Lower leg skin (tissue), 4 donors: ENCODE measurements at regions of chr20 and their contacts with region 1.

Region 1: DNA sequence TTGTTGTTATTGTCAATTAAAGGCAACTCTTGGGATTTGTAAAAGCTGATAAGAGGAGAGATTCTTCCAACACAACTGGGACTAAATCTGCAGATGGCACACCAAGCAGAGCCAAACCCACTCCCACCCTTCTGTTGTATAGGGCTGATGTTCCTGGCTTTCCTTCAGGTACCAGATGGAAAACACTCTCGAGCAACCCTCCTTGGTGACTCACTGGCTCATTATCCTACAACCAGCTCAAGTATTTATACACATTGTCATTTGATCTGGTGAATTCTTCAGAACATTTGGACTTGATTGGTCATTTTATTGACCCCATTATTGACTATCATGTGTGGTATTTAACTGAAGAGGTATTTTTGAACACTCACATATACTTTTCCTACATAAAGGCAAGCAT is 190.3 kb upstream of the PCSK2 start:
- DNase-seq: no peak
- H3K4me3 ChIP-seq: no peak overlapping the region
- CTCF ChIP-seq: no peak
- POLR2A ChIP-seq: no peak

Region 2: DNA sequence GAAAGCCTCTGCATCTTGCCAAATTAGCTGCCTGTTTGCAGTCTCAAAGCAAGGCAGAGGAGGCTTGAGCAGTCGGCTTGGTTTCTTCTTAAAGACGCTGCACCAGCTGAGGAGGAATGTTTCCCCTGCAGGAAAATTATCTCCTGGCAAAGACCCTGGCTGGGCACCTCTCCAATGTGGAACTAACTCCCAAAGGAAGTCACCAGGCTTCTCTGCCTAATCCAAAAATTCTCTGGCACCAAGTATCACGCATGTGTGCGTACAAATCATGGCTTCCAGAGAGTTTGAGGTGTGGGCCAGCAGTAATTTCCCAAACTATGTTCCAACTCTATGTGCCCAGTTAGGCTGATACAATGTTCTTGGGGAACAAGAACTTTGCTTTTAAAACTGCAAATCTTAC is 639.5 kb before region 1 on chr20:
- intact Hi-C with region 1: loop called (anchors 5 kb)
- DNase-seq: peak in 1 of 2 donors; percentile 26
- H3K4me3 ChIP-seq: no peak overlapping the region
- CTCF ChIP-seq: no peak
- POLR2A ChIP-seq: no peak